Caco-2 (cell line): ENCODE measurements at regions of chr6 and their contacts with region 1.

Region 1: GRCh38 chr6:70520575-70520974 is 46.2 kb upstream of the SDHAF4 start:
- DNase-seq: no peak
- H3K4me3 ChIP-seq: no peak overlapping the region
- H3K4me3 Mint-ChIP-seq: no peak overlapping the region
- H3K27ac Mint-ChIP-seq: no peak overlapping the region
- H3K4me1 ChIP-seq: no peaks in the 10 kb centered on the region
- H3K4me1 Mint-ChIP-seq: no peaks in the 10 kb centered on the region
- H3K27me3 ChIP-seq: no peaks in the 10 kb centered on the region
- H3K27me3 Mint-ChIP-seq: no peaks in the 10 kb centered on the region
- CTCF ChIP-seq: peak; percentile 23 to 33

Region 2: DNA sequence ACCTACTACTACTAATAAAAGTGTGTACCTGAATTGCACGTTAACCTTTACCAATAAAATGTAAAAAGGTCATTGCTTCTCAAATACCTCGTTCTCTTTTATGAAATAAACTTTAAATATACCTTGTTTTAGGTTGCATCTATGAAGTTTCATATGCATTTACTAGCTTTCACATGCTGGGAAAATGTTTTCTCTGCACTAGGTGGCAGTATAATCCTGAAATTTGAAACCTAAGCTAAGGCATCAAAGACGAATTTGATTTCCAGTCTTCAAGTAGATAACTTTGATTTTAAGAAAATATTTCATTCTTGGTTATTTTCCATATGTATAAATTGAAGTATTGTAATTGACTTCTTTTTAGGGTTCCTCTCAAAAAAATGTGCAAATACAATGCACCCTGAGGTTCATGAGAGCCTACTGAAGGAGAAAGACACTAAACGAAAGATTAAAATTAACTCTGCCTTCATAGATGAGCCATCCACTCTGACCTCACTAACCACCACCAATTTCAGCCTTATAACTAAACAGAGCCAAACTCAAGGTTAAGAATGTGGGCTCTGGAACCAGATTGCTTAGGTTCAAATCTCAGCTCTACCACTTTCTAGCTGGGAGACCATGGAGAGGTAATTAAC is 210.4 kb before region 1 on chr6:
- CTCF ChIA-PET with region 1: interaction called, 3 read pairs
- POLR2A ChIA-PET with region 1: no interaction called
- intact Hi-C with region 1: loop called (anchors 10 kb)
- DNase-seq: peak in 1 of 2 experiments; percentile 39
- H3K4me3 ChIP-seq: no peak overlapping the region
- H3K4me3 Mint-ChIP-seq: no peak overlapping the region
- H3K27ac Mint-ChIP-seq: no peak overlapping the region
- H3K4me1 ChIP-seq: no peaks in the 10 kb centered on the region
- H3K4me1 Mint-ChIP-seq: peaks cover 6% of the 10 kb centered on the region
- H3K27me3 ChIP-seq: no peaks in the 10 kb centered on the region
- H3K27me3 Mint-ChIP-seq: peaks cover 13% of the 10 kb centered on the region
- CTCF ChIP-seq: peak; percentile 19 to 52

Region 3: GRCh38 chr6:70470016-70470415 is 50.6 kb before region 1 on chr6:
- CTCF ChIA-PET with region 1: no interaction called
- POLR2A ChIA-PET with region 1: no interaction called
- intact Hi-C with region 1: no loop called
- DNase-seq: no peak
- H3K4me3 ChIP-seq: no peak overlapping the region
- H3K4me3 Mint-ChIP-seq: no peak overlapping the region
- H3K27ac Mint-ChIP-seq: no peak overlapping the region
- H3K4me1 ChIP-seq: no peaks in the 10 kb centered on the region
- H3K4me1 Mint-ChIP-seq: peaks cover 13% of the 10 kb centered on the region
- H3K27me3 ChIP-seq: no peaks in the 10 kb centered on the region
- H3K27me3 Mint-ChIP-seq: no peaks in the 10 kb centered on the region
- CTCF ChIP-seq: no peak

Region 4: GRCh38 chr6:70489393-70489792 is 31.2 kb before region 1 on chr6:
- CTCF ChIA-PET with region 1: no interaction called
- POLR2A ChIA-PET with region 1: no interaction called
- intact Hi-C with region 1: no loop called
- DNase-seq: no peak
- H3K4me3 ChIP-seq: no peak overlapping the region
- H3K4me3 Mint-ChIP-seq: no peak overlapping the region
- H3K27ac Mint-ChIP-seq: no peak overlapping the region
- H3K4me1 ChIP-seq: no peaks in the 10 kb centered on the region
- H3K4me1 Mint-ChIP-seq: no peaks in the 10 kb centered on the region
- H3K27me3 ChIP-seq: no peaks in the 10 kb centered on the region
- H3K27me3 Mint-ChIP-seq: no peaks in the 10 kb centered on the region
- CTCF ChIP-seq: no peak

Region 5: DNA sequence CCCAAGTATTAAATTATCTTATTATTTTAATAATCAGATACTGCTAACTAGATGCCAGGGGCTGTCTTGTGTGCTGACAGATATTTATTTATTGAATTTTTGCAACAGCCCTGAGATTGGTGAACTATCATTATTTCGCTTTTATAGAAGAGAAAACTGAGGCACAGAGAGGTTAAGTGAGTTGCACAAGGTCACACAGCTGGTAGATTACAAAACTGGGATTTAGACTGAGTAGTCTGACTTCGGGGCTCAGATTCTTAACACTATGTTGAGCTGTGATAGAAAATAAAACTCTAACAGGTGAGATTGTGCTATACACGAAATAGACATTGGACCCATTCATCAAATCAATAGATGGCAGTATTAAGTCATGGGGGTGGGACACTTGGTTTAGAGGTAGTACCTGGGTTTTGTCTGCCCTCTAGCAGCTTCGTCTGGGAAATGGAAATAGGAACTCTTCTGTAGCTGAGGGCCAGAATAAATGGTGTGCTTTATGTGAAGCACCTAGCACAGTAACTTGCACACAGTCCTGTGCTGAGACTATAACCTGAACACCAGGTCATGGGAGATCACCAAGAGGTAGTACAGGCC is 322.8 kb after region 1 on chr6:
- CTCF ChIA-PET with region 1: no interaction called
- POLR2A ChIA-PET with region 1: no interaction called
- intact Hi-C with region 1: loop called (anchors 1 kb)
- DNase-seq: peak in 1 of 2 experiments; percentile 13
- H3K4me3 ChIP-seq: no peak overlapping the region
- H3K4me3 Mint-ChIP-seq: no peak overlapping the region
- H3K27ac Mint-ChIP-seq: no peak overlapping the region
- H3K4me1 ChIP-seq: no peaks in the 10 kb centered on the region
- H3K4me1 Mint-ChIP-seq: peaks cover 7% of the 10 kb centered on the region
- H3K27me3 ChIP-seq: no peaks in the 10 kb centered on the region
- H3K27me3 Mint-ChIP-seq: no peaks in the 10 kb centered on the region
- CTCF ChIP-seq: no peak